Left ventricle myocardium inferior (tissue), 1 donor: ENCODE measurements at regions of chr12 and their contacts with region 1.

Region 1: GRCh38 chr12:32290411-32290810 is 108.9 kb upstream of the FGD4 start:
- DNase-seq: no peak
- H3K4me3 ChIP-seq: no peak overlapping the region
- H3K27ac ChIP-seq: no peak overlapping the region
- H3K4me1 ChIP-seq: no peaks in the 10 kb centered on the region
- H3K27me3 ChIP-seq: no peaks in the 10 kb centered on the region
- CTCF ChIP-seq: no peak

Region 2: DNA sequence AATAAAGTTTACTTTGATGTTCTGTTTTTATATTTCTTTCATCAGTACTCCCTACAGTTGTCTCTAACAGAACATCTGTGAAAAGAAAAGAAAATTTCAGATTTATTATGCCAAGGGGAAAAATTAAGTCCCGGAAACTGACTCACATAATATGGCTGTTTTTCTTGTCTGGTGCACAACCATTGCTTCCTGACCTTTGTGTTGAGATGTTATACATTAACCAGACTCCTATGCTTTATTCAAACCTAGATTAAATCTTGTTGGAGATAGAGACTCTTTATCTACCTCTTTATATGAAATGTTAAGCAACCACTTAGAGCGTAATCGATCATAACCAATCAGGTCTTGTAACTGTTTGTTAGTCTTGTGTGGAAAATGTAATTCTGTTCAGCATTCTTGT is 221.3 kb before region 1 on chr12:
- intact Hi-C with region 1: loop called (anchors 10 kb)
- DNase-seq: no peak
- H3K4me3 ChIP-seq: no peak overlapping the region
- H3K27ac ChIP-seq: no peak overlapping the region
- H3K4me1 ChIP-seq: no peaks in the 10 kb centered on the region
- H3K27me3 ChIP-seq: no peaks in the 10 kb centered on the region
- CTCF ChIP-seq: no peak

Region 3: GRCh38 chr12:32322354-32322753 is 31.9 kb after region 1 on chr12:
- intact Hi-C with region 1: no loop called
- DNase-seq: no peak
- H3K4me3 ChIP-seq: no peak overlapping the region
- H3K27ac ChIP-seq: no peak overlapping the region
- H3K4me1 ChIP-seq: no peaks in the 10 kb centered on the region
- H3K27me3 ChIP-seq: no peaks in the 10 kb centered on the region
- CTCF ChIP-seq: no peak